ENCODE measurements at regions of chr15 and their contacts with region 1.

Region 1: DNA sequence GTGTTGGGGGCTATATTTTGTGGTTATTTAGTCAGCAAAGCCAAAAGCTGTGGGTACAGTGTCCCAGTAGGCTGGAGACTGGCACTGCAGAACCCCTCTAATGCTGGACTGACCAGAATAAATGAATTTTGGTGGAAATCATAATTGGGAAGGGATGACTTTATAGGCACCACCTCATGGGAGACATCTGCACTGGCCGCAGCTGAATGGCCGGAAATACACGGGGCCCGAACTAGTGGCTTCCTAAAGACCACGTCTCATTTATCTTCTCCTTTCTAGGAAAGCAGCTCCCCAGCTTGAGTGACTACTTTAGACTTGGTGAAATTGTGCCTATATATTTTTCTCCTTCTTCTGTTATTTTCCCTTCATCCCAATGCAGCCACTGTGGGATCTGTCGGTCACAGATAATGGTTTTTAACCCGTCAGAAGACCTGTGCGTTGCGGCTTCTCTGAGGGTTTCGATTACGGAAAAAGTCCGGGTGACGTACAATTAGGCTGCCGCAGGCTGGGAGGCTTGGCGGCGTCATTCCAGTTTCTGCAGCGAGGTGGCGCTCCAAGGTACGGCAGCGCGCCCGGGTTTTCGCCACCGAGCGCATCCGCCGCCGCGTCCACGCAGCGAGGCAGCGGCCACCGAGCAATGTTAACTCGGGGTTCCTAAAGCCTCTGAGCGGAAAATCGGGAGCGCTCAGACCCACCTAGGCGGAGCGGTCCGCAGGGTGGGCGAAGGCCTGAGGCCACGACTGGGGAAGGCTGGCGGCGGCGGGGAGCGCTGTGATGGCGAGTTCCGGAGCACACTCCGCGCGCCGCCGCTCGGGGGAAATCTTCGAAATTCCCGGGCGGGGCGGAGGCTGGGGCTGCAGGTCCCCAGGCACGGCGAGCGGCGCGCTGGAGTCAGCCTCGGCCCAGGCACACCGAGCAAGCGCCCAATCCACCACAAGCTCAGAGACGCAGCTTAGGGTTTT is 26.3 kb downstream of the NR2F2 start:
- DNase-seq: peak; percentile 83 to 94 (median 93)
- ATAC-seq: peak; percentile 63 to 66
- H3K4me3 ChIP-seq: peak overlapping the region; percentile 58
- H3K27ac ChIP-seq: peak overlapping the region; percentile 46
- H3K4me1 ChIP-seq: peaks cover 4% of the 10 kb centered on the region
- H3K27me3 ChIP-seq: no peaks in the 10 kb centered on the region

Region 2: GRCh38 chr15:95975212-95975611 is 381.6 kb before region 1 on chr15:
- intact Hi-C with region 1: no loop called
- DNase-seq: no peak
- ATAC-seq: no peak
- H3K4me3 ChIP-seq: no peak overlapping the region
- H3K27ac ChIP-seq: no peak overlapping the region
- H3K4me1 ChIP-seq: peaks cover 3% of the 10 kb centered on the region
- H3K27me3 ChIP-seq: no peaks in the 10 kb centered on the region

Region 3: GRCh38 chr15:96409215-96410138 is 52.7 kb after region 1 on chr15:
- intact Hi-C with region 1: loop called in 2 of 4 experiments (anchors 5 to 10 kb)
- DNase-seq: no peak
- ATAC-seq: no peak
- H3K4me3 ChIP-seq: peak overlapping the region; percentile 70
- H3K27ac ChIP-seq: no peak overlapping the region
- H3K4me1 ChIP-seq: peaks cover 3% of the 10 kb centered on the region
- H3K27me3 ChIP-seq: no peaks in the 10 kb centered on the region

Region 4: GRCh38 chr15:96416934-96417759 is 60.4 kb after region 1 on chr15:
- intact Hi-C with region 1: loop called in 2 of 4 experiments (anchors 5 to 10 kb)
- DNase-seq: peak; percentile 35 to 59 (median 52)
- ATAC-seq: peak; percentile 77 to 82
- H3K4me3 ChIP-seq: peak overlapping the region; percentile 25
- H3K27ac ChIP-seq: no peak overlapping the region
- H3K4me1 ChIP-seq: no peaks in the 10 kb centered on the region
- H3K27me3 ChIP-seq: no peaks in the 10 kb centered on the region

Region 5: DNA sequence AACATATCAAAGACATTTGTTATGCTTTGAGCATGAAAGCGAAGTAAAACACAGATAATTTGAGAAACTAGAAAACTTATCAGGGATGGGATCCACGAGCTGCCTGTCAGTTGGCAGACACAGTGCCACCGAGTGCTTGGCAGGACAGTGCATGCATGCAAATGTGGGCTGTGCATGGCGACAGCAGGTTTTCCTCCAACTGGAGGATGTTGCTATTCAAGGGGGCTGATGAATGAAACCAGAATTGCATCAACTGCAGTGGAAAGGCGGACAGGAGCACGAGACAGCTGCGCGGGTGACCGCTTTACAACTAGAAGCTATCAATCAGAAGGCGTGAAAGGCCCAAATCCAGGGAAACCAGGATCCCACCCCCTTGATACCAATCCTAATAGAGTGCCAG is 218.0 kb after region 1 on chr15:
- intact Hi-C with region 1: loop called in 1 of 4 experiments (anchors 5 kb)
- DNase-seq: no peak
- ATAC-seq: no peak
- H3K4me3 ChIP-seq: no peak overlapping the region
- H3K27ac ChIP-seq: no peak overlapping the region
- H3K4me1 ChIP-seq: no peaks in the 10 kb centered on the region
- H3K27me3 ChIP-seq: no peaks in the 10 kb centered on the region

Region 6: DNA sequence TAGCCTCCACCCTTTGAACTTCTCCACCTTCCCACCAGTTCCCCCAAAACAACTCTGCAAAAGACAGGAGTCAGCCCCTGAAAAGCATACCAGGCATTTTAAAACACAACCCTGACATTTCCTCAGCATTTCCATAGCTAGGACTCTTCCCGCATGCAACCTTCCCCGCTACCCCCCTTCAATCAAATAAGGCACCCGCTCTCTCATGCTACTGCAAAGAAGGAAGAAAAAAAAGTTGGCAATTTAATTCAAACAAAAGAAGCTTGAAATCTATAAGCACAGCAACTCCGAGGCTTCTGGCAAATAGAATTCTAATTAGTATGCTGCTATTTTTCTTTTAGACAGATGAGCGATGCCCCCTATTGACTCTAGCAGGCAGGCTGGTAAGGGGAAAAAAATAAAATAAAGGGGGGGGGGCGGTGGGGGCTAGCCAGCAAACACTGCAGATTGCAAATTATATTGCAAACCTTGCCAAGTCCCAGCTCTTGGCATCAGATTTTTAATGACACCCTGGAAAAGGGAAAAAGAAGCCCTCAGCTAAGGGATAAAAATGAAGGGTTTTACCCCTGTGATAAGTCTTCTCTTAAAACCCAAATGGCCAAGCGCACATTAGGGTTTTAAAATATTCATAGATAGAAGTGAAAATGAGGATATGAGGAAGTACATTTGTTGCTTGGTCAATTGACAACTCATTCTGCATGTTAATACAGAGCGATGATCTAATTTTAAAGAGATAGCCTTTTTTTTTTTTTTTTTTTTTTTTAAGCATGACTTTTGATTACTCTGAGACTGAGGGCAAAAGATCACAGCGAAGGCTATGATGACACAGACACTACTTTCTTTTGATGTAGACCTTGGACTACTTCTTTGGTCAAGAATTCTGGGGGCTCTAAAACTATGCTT is 229.0 kb after region 1 on chr15:
- intact Hi-C with region 1: loop called in 3 of 4 experiments (anchors 2 to 10 kb)
- DNase-seq: no peak
- ATAC-seq: no peak
- H3K4me3 ChIP-seq: no peak overlapping the region
- H3K27ac ChIP-seq: no peak overlapping the region
- H3K4me1 ChIP-seq: no peaks in the 10 kb centered on the region
- H3K27me3 ChIP-seq: no peaks in the 10 kb centered on the region

Region 7: DNA sequence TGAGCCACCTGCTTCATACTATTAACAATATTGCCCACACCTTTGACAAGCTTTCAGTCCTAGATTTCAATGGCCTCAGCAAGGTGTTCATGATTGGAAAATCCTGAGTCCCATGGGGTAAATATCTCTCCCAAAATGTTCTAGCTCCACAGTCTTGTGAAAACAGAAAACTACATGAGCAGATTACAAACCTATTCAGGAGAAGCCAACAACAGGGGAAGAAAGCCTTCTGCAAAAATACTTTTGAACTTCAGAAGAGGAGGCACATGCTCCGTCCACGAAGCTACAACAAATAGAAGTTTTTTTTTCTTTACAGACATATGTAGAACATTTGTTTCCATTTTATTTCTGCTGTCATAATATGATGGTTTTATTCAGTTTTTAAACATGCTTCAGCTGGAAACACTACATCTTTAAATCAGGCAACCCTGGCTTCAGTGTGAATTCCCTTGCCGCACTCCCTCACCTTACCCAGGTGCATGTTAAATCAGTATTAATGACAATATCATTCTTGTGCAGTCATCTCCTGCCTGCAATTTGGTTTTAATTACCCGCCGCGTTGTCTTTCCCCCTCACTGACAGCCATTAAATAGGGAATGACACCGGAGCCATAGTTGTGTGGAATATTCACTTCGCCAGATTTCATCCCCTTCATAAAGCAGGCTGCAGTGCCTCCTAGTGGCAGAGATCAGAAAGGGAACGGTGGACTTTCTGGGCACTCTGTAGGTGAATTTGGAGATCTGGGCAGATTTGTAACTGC is 878.3 kb after region 1 on chr15:
- intact Hi-C with region 1: loop called in 1 of 4 experiments (anchors 10 kb)
- DNase-seq: peak; percentile 39 to 58 (median 58)
- ATAC-seq: peak; percentile 68 to 78
- H3K4me3 ChIP-seq: no peak overlapping the region
- H3K27ac ChIP-seq: no peak overlapping the region
- H3K4me1 ChIP-seq: no peaks in the 10 kb centered on the region
- H3K27me3 ChIP-seq: no peaks in the 10 kb centered on the region

Measured in right cardiac atrium (tissue), 5 donors.